Activated T-helper 1 cell treated with anti-CD3 and anti-CD28 coated beads, Interleukin-12 subunit alpha, Interleukin-12 subunit beta, Interleukin-2, Interleukin-4 antibody, amounts not matched to agents 30 ng/mL and 10 ng/mL and 1 ng/mL, durations not matched to agents 14 hours and 24 hours and 36 hours (primary cell): ENCODE measurements at regions of chr6 and their contacts with region 1.

Region 1: DNA sequence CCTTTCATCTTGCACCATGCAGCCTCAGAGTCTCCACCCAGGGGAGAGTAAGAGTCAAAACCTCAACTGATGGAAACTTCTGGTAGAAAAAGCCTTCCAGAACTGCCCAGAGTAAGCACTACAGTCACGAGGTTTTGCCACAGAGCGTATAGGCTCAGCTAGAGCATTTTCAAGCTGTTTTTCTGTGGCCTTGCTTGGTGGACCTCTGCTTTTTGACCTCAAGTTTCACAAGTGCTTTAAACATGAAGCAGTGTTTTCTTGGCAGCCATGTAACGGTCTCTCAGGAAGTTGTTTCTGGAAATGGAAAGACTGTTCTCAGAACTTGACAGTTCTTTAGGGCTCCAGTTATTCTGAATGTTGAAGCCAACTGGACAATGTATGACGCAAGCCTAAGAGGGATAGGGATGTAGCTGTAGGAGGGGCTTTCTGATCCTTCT is 146.5 kb downstream of the ZDHHC14 start:
- DNase-seq: peak; percentile 56
- H3K4me3 Mint-ChIP-seq: peak overlapping the region; percentile 23
- H3K27ac Mint-ChIP-seq: peak overlapping the region; percentile 64
- H3K4me1 Mint-ChIP-seq: peaks cover 40% of the 10 kb centered on the region
- H3K27me3 Mint-ChIP-seq: peaks cover 6% of the 10 kb centered on the region

Region 2: DNA sequence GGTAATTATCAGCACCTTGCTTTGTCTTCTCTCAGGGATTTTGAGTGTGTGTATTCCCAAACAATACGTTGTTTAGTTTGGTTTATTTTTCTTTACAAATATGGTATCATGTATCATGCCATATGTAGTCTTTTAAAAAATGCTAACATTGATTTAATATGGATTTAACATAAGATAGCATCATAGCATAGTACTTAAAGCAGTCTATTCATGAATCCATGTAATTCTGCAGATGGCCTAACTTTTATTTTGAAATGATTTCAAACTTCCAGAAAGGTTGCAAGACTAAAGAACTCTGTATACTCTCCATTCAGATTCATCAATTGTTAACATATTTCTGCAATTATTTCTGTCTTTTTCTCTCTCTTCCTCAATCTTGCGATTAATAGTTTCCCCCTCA is 138.6 kb before region 1 on chr6:
- intact Hi-C with region 1: no loop called
- DNase-seq: no peak
- H3K4me3 Mint-ChIP-seq: no peak overlapping the region
- H3K27ac Mint-ChIP-seq: no peak overlapping the region
- H3K4me1 Mint-ChIP-seq: peaks cover 32% of the 10 kb centered on the region
- H3K27me3 Mint-ChIP-seq: no peaks in the 10 kb centered on the region

Region 3: GRCh38 chr6:157443066-157443800 is 84.3 kb before region 1 on chr6:
- intact Hi-C with region 1: loop called (anchors 2 kb)
- DNase-seq: no peak
- H3K4me3 Mint-ChIP-seq: peak overlapping the region; percentile 43
- H3K27ac Mint-ChIP-seq: peak overlapping the region; percentile 85
- H3K4me1 Mint-ChIP-seq: peaks cover 30% of the 10 kb centered on the region
- H3K27me3 Mint-ChIP-seq: peaks cover 3% of the 10 kb centered on the region

Region 4: DNA sequence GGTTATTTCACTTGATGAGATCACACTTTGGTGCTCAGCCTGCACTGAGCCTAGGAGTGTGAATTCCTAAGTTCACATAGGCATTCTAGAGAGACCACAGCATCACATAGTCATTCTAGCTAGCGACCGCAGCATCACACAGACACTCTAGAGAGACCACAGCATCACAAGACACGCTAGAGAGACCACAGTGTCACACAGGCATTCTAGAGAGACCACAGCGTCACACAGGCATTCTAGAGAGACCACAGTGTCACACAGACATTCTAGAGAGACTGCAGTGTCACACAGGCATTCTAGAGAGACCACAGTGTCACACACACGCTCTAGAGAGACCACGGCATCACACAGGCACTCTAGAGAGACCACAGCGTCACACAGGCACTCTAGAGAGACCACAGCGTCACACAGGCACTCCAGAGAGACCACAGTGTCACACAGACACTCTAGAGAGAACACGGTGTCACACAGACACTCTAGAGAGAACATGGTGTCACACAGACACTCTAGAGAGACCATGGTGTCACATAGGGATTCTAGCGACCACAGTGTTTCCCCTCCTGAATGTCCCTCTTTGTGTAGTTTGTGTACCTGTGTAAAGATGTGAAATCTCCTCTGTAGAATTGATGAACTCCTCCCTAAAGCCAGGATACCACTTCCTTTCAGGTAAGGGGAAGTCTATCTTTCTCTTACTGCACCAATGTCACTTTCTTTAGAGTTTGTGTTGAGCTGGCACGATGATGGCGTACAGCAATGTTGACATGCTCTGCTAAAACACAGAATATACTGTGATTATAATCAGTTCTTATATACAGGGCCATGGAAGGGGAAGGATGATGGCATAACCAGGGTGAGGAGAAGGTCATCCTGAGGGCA is 22.9 kb after region 1 on chr6:
- intact Hi-C with region 1: loop called (anchors 1 kb)
- DNase-seq: no peak
- H3K4me3 Mint-ChIP-seq: no peak overlapping the region
- H3K27ac Mint-ChIP-seq: peak overlapping the region; percentile 1
- H3K4me1 Mint-ChIP-seq: peaks cover 29% of the 10 kb centered on the region
- H3K27me3 Mint-ChIP-seq: peaks cover 15% of the 10 kb centered on the region